ENCODE measurements at regions of chr4 and their contacts with region 1.

Region 1: GRCh38 chr4:139108567-139109128 is 68.4 kb downstream of the ELF2 start:
- DNase-seq: no peak
- H3K4me3 ChIP-seq: no peak overlapping the region
- H3K27ac ChIP-seq: no peak overlapping the region
- H3K4me1 ChIP-seq: no peaks in the 10 kb centered on the region
- H3K27me3 ChIP-seq: no peaks in the 10 kb centered on the region
- CTCF ChIP-seq: no peak
- POLR2A ChIP-seq: no peak

Region 2: GRCh38 chr4:139167774-139168444 is 59.3 kb after region 1 on chr4:
- intact Hi-C with region 1: loop called (anchors 10 kb)
- DNase-seq: peak in 2 of 7 donors; percentile 26 to 33
- H3K4me3 ChIP-seq: no peak overlapping the region
- H3K27ac ChIP-seq: no peak overlapping the region
- H3K4me1 ChIP-seq: peaks cover 5 to 44% of the 10 kb centered on the region in 2 donors
- H3K27me3 ChIP-seq: no peaks in the 10 kb centered on the region
- CTCF ChIP-seq: peak; percentile 28 to 75 (median 58)
- POLR2A ChIP-seq: no peak

Region 3: DNA sequence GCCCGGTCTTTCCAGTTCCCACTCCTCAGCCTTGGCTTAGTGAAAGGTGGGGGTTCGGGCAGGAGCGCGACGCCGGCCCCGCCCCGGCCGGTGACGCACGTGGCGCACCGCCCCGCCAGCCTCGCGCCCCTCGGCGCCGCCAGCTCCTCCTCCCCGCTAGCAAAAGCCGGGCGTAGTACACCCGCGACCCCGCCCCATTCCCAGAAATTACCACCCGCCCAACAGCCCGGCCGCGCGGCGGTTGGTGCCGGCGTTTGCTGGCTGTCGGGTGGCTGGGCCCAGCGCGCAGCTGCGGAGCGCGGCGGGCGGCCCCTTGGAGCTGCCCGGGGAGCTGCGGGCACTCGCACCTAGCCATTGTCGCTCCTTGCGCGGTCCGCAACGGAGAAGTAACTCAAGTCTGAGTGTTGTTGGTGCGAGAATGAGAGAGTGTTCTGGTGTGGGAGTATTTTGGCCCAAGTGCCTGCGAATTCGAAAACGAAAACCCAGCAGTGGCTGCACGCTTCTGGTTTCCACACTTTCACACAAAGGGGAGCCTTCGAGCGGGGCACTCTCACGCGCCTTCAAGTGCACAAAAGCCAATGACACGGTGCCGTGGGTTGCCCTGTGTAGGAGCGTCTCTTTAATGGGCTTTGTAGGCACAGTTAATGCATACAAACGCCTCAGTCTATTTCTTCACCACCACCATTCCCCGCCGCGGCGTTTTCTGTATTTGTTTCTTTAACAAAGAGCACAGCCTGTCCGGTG is 69.4 kb after region 1 on chr4:
- intact Hi-C with region 1: loop called in 1 of 2 experiments (anchors 10 kb)
- DNase-seq: peak; percentile 96 to 97 (median 96)
- H3K4me3 ChIP-seq: peak overlapping the region; percentile 66 to 94 (median 94)
- H3K27ac ChIP-seq: peak overlapping the region; percentile 93 to 100 (median 99)
- H3K4me1 ChIP-seq: peaks cover 7 to 21% of the 10 kb centered on the region in 2 donors
- H3K27me3 ChIP-seq: no peaks in the 10 kb centered on the region
- CTCF ChIP-seq: peak in 2 of 6 experiments; percentile 18 to 24
- POLR2A ChIP-seq: peak; percentile 93 to 98

Region 4: DNA sequence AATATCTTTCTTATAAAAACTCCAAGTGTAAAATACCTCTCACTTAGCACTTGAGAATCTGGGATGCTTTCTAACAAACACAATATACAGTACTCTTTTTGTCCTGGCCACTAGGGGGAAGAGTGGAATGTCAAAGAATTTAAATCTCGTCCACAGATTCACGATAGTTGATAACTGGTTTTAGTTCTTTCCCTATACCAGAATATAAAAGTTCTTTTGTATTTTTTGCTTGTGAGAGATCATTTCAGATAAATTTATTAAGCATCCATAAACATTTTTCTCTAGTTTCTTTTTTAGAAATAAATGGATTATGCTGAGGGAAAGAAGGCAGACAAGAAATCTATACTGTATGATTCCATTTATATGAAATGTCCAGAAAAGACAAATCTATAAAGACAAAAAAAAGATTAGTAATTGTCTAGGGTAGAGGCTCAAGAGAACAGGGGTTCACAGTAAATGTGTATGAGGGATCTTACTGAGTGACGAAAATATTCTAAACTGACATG is 120.9 kb after region 1 on chr4:
- intact Hi-C with region 1: no loop called
- DNase-seq: no peak
- H3K4me3 ChIP-seq: no peak overlapping the region
- H3K27ac ChIP-seq: no peak overlapping the region
- H3K4me1 ChIP-seq: peaks cover 0 to 4% of the 10 kb centered on the region in 2 donors
- H3K27me3 ChIP-seq: no peaks in the 10 kb centered on the region
- CTCF ChIP-seq: peak; percentile 71 to 86 (median 79)
- POLR2A ChIP-seq: no peak